ENCODE measurements at regions of chr11 and their contacts with region 1.

Region 1: GRCh38 chr11:48063424-48063978 is 83.1 kb downstream of the PTPRJ start:
- DNase-seq: peak; percentile 40 to 58 (median 47)
- H3K4me3 ChIP-seq: peak overlapping the region in 1 of 3 experiments; percentile 46
- H3K4me3 Mint-ChIP-seq: peak overlapping the region; percentile 1 to 71
- H3K27ac ChIP-seq: peak overlapping the region; percentile 47 to 62
- H3K27ac Mint-ChIP-seq: peak overlapping the region; percentile 84 to 90 (median 88)
- H3K4me1 ChIP-seq: peaks cover 63 to 80% of the 10 kb centered on the region in 2 donors
- H3K4me1 Mint-ChIP-seq: peaks cover 74% of the 10 kb centered on the region
- H3K27me3 ChIP-seq: no peaks in the 10 kb centered on the region
- H3K27me3 Mint-ChIP-seq: no peaks in the 10 kb centered on the region
- CTCF ChIP-seq: no peak

Region 2: GRCh38 chr11:48013269-48013901 is 50.1 kb before region 1 on chr11:
- intact Hi-C with region 1: loop called in 1 of 2 experiments (anchors 10 kb)
- DNase-seq: peak; percentile 68 to 87 (median 82)
- H3K4me3 ChIP-seq: peak overlapping the region in 1 of 3 experiments; percentile 42
- H3K4me3 Mint-ChIP-seq: peak overlapping the region; percentile 45 to 80
- H3K27ac ChIP-seq: peak overlapping the region; percentile 59 to 77
- H3K27ac Mint-ChIP-seq: peak overlapping the region; percentile 85 to 96 (median 90)
- H3K4me1 ChIP-seq: peaks cover 91 to 92% of the 10 kb centered on the region in 2 donors
- H3K4me1 Mint-ChIP-seq: peaks cover 92% of the 10 kb centered on the region
- H3K27me3 ChIP-seq: no peaks in the 10 kb centered on the region
- H3K27me3 Mint-ChIP-seq: peaks cover 0 to 3% (median 0%) of the 10 kb centered on the region in 3 donors
- CTCF ChIP-seq: no peak